ENCODE measurements at regions of chr1 and their contacts with region 1.

Region 1: GRCh38 chr1:21200767-21201166 is 24.1 kb upstream of the EIF4G3 start:
- DNase-seq: no peak
- ATAC-seq: no peak
- H3K4me3 Mint-ChIP-seq: no peak overlapping the region
- H3K27ac Mint-ChIP-seq: no peak overlapping the region
- H3K4me1 Mint-ChIP-seq: no peaks in the 10 kb centered on the region
- H3K27me3 Mint-ChIP-seq: peaks cover 36% of the 10 kb centered on the region
- CTCF ChIP-seq: no peak

Region 2: DNA sequence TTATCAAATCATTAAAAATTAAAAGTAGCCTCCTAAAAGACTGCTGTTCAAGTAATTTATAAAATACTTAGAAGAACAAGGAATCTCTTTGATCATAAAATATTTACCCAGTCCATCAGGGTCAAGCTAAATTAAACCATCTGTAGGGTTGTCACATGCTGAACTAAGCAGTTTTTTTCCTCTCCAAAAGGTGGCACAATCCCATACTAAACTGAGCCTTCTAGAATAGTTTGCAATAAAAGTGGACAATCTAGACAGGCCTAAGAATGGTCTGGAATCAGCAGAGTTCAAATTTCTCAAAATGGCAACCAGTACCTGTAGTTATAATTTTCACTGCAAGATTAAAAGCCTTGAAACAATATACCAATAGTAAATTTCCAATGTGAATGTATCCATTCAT is 218.9 kb before region 1 on chr1:
- CTCF ChIA-PET with region 1: interaction called, 14 read pairs
- POLR2A ChIA-PET with region 1: no interaction called
- DNase-seq: no peak
- ATAC-seq: no peak
- H3K4me3 Mint-ChIP-seq: no peak overlapping the region
- H3K27ac Mint-ChIP-seq: no peak overlapping the region
- H3K4me1 Mint-ChIP-seq: no peaks in the 10 kb centered on the region
- H3K27me3 Mint-ChIP-seq: no peaks in the 10 kb centered on the region
- CTCF ChIP-seq: no peak

Region 3: DNA sequence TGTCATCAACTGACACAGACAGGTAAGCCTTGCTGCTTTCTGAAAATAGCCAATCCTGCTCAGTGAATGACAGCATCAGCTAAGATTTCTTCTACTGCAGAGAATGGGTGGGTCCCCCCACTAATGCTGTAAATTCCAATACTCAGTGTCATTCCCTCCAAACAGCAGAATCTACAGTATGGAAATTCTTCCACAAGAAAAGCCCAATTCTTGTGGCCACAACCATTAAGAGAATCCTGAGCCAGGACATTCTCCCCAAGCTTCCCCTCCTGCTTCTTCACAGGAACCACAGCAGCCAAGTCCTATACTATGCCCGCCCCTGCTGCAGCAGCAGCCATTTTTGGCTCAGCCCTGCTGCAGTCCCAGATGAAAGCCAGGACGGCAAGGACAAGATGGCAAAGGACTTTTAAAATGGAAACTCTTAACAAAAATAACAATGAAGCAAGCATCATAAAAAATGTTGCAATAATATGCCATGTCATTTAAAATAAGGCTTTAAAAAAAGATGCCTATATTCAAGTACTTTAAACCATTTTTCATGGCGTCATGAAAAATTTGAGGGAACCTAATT is 50.8 kb before region 1 on chr1:
- CTCF ChIA-PET with region 1: no interaction called
- POLR2A ChIA-PET with region 1: no interaction called
- DNase-seq: no peak
- ATAC-seq: peak; percentile 53; the same call in 1 of the 2 replicates
- H3K4me3 Mint-ChIP-seq: no peak overlapping the region
- H3K27ac Mint-ChIP-seq: peak overlapping the region; percentile 55
- H3K4me1 Mint-ChIP-seq: peaks cover 2% of the 10 kb centered on the region; the same call in 1 of the 2 replicates
- H3K27me3 Mint-ChIP-seq: no peaks in the 10 kb centered on the region
- CTCF ChIP-seq: no peak

Region 4: DNA sequence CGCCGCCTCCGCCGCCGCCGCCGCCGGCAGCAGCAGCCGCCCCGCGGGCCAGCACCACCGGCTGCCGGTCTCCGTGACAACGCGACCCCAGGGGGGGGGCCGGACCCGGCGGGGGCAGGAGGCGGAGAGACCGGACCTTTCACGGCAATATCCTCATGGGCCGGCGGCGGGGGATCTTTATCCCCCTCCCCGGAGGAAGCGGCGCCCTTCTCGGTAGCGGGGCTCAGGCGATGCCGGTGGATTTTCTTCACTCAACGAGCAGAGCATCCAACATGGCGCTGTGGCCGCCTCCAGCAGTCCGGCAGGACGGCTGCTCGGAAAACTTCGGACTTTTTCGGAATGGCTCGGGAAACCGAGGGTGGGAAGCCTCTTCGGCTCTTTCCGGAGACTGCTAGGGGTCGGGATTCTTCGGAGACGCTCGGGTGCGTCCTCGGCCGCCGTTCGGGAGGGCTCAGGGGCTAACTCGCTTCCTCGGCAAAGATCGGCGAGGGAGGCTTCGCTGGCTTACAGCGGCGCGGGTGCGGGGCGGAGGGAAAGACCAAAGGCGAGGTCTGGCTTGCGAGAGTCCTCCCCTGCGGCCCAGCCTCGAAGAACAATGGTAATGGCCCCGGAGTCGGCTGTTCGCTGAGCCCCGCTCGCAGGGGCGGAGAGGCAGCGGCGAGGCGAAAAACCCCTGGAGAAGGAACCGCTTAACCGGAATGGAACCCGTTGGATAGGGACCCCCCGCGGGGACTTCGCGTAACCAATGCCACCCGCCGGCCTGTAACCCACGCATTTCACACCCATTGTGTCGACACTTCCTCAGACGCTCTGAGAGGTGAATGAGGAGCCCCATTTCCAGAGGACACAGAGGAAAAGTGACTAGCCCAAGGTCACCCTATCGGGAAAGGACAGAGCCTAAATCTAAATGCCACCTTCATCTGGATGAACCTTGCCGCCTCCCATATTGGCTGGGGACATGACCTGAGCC is 23.9 kb before region 1 on chr1 and contains the start of gene EIF4G3:
- CTCF ChIA-PET with region 1: interaction called, 31 read pairs
- POLR2A ChIA-PET with region 1: no interaction called
- DNase-seq: peak; percentile 100
- ATAC-seq: peak; percentile 99
- H3K4me3 Mint-ChIP-seq: peak within 1 kb of the TSS; percentile 82
- H3K27ac Mint-ChIP-seq: peak within 1 kb of the TSS; percentile 85
- H3K4me1 Mint-ChIP-seq: peaks cover 18% of the 10 kb centered on the region
- H3K27me3 Mint-ChIP-seq: peaks cover 37% of the 10 kb centered on the region
- CTCF ChIP-seq: no peak
- total RNA-seq, gene EIF4G3: 76.7 to 78.8 TPM (median 77.7 TPM) in 3 replicates

Region 5: DNA sequence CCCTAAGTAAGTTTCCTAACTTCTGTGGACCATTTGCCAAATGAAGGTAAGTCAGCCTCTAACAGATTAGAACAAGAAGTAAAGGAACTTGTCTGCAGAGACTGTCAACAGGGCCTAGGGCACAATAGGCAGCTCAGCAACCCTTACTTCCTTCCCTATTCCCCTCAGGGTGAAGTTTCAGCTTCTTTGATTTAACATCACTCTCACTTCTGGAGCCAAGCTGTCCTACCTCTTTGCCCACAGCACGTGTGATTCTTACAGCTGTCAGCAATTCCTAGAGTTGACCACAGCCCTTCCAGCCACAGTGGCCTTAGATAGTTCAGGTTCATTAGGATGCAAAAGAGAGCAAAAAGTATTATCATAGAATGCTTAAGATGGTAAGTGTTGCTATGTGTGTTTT is 16.5 kb before region 1 on chr1:
- CTCF ChIA-PET with region 1: interaction called, 31 read pairs
- POLR2A ChIA-PET with region 1: no interaction called
- DNase-seq: no peak
- ATAC-seq: no peak
- H3K4me3 Mint-ChIP-seq: no peak overlapping the region
- H3K27ac Mint-ChIP-seq: no peak overlapping the region
- H3K4me1 Mint-ChIP-seq: no peaks in the 10 kb centered on the region
- H3K27me3 Mint-ChIP-seq: peaks cover 86% of the 10 kb centered on the region
- CTCF ChIP-seq: no peak

Region 6: DNA sequence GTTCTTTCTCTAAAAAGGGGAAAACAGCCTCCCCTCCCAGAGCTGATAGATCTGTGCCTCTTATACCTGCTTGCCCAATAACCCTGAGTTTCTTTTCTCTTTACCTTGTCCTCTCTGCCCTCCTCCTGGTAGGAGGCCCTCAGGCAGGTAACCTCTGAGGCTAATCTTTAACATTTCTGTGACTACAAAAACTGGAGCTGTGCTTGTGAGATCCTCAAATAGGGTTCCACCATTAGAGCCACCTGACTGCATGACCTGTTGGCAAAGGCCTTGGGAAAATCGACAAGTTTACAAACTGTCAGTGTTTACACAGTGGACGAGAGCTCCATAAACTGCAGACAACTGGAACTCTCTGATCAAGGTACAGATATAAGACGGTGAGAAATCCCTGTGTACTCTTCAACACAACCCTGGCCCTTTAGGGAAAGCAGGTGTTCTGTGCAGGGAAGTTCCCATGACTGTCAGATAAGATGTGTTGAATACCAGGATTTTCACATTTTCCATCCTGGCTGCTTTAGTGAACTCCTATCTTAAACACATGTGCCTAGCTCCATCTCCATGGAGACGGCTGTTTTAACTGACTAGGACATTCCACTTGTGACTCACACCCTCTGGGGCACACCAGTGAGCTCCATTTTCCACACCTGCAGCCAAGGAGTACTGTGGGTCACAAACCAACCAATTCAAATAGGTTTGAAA is 51.2 kb after region 1 on chr1:
- CTCF ChIA-PET with region 1: no interaction called
- POLR2A ChIA-PET with region 1: no interaction called
- DNase-seq: no peak
- ATAC-seq: no peak
- H3K4me3 Mint-ChIP-seq: no peak overlapping the region
- H3K27ac Mint-ChIP-seq: no peak overlapping the region; the same call in 1 of the 2 replicates
- H3K4me1 Mint-ChIP-seq: no peaks in the 10 kb centered on the region
- H3K27me3 Mint-ChIP-seq: no peaks in the 10 kb centered on the region
- CTCF ChIP-seq: no peak